MCF 10A (cell line): ENCODE measurements at regions of chr9 and their contacts with region 1.

Region 1: DNA sequence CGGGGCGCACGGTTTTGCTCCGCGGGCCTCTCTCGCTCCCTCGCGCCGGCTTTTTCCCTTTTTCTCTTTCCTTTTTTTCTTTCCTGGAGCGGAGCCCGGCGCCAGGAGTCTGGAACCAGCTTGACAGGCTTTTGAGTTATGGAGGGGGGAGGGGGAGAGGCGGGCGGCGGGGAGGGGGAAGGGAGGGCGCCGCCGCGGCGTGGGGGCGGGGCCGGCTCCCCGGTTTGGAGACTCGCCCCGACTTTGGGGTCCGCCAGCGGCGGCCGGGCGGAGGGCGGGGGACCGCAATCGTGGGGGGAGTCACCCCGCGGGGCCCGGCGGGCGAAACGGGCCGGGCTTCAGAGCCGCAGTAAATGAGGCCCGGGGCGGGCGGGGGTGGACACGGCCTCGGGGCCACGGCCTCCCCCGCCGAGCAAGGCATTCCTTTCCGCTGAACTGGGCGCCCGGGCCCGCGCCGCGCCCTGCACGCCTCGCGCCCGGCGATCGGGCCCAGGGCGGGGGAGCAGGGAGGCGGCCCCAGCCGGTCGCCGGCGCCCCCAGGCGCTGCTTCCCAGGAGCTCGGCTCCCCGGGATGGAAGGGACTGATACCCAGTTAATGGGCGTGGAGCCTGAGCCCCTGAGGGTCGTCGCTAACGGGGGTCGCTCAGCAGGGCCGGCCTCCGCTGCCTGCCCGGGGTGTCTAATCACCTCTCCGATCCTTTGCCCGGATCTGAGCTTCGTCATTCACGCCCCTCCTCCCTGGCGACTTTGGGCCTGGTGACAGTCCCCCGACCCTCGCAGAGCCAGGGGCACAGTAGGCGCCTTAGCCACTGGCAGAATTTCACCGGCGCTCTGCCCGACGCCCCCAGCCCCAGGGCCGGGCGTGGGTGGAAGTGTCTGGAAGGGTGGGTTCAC is 138.1 kb downstream of the C9orf50 start:
- DNase-seq: peak; percentile 92
- H3K4me3 Mint-ChIP-seq: peak overlapping the region; percentile 70
- H3K27ac Mint-ChIP-seq: peak overlapping the region; percentile 93
- H3K4me1 Mint-ChIP-seq: peaks cover 47% of the 10 kb centered on the region
- H3K27me3 Mint-ChIP-seq: no peaks in the 10 kb centered on the region
- CTCF ChIP-seq: no peak

Region 2: DNA sequence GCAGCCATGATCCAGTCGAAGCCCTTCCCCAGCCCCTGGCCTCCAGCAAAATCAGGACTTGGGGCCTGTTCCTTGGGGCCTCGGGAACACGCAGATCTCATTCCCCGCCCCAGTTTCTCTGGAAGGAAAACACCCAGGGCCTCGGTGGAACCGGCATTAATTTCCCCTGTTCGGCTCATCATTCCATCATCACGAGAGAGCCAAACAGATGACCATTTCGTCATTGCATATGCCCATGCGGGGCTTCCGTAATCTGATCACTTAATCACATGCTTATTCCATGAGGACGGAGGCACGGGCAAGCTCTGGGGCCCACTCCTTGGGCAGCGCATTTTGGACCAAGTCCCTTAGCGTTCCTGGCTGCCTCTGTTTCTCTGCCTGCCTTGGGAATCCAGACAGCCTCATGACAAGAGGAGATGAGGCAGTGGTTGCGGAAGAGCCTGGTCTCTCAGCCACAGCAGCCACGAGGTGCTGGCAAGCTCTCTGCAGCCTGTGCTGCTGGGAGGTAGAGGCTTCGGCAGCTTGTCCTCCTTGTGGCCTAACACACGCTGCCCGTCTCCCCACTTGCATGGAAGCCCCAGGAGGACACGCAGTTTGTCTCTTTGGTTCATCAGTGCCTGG is 239.7 kb before region 1 on chr9:
- CTCF ChIA-PET with region 1: no interaction called
- POLR2A ChIA-PET with region 1: no interaction called
- intact Hi-C with region 1: no loop called
- DNase-seq: no peak
- H3K4me3 Mint-ChIP-seq: no peak overlapping the region
- H3K27ac Mint-ChIP-seq: no peak overlapping the region
- H3K4me1 Mint-ChIP-seq: peaks cover 10% of the 10 kb centered on the region
- H3K27me3 Mint-ChIP-seq: no peaks in the 10 kb centered on the region
- CTCF ChIP-seq: no peak

Region 3: DNA sequence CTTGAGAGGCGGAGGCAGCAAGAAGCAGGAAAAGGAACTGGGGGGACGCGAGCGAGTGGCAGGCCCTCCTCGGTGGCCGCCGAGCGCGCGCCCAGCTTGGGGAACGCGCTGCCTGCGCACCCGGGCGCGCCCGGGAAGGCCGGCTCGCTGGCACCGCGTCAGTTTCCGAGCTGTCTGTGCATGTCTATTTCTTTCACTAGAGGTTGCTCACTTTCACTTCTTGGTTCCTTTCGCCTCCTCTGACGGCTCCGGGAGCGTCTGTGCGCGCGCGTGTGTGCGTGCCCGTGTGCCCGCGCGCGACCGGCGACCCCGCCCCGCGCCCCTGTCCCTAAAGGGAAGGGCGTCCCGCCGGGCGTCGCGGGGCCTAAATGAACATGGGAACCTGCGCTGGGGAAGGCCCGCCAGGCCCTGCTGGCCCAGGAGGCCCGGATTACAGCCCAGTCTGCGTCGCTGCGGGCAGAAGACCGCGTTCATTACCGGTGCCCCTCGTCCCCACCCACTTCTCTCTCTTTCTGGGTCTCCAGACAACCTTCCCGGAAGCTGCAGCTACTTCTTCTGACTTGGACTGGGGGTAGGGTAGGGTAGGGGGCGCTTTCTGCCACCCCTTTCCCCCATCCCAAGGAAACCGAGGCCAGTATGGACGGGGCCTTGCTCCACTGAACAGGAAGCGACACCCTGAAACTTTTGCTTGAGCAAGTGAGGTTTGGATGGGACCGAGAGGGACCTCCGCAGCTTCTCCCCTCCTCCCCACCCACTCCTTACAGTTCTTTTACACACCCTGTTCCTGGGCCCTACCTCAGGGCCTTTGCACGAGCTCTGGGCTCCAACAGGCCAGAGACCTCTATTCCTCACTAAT is 99.0 kb before region 1 on chr9:
- CTCF ChIA-PET with region 1: interaction called, 3 read pairs
- POLR2A ChIA-PET with region 1: interaction called, 10 read pairs
- intact Hi-C with region 1: no loop called
- DNase-seq: peak; percentile 52
- H3K4me3 Mint-ChIP-seq: peak overlapping the region; percentile 53
- H3K27ac Mint-ChIP-seq: no peak overlapping the region
- H3K4me1 Mint-ChIP-seq: peaks cover 6% of the 10 kb centered on the region
- H3K27me3 Mint-ChIP-seq: no peaks in the 10 kb centered on the region
- CTCF ChIP-seq: no peak

Region 4: GRCh38 chr9:129413537-129414376 is 69.0 kb before region 1 on chr9:
- CTCF ChIA-PET with region 1: no interaction called
- POLR2A ChIA-PET with region 1: interaction called, 10 read pairs
- intact Hi-C with region 1: no loop called
- DNase-seq: peak; percentile 95
- H3K4me3 Mint-ChIP-seq: peak overlapping the region; percentile 73
- H3K27ac Mint-ChIP-seq: peak overlapping the region; percentile 95
- H3K4me1 Mint-ChIP-seq: no peaks in the 10 kb centered on the region
- H3K27me3 Mint-ChIP-seq: no peaks in the 10 kb centered on the region
- CTCF ChIP-seq: no peak

Region 5: GRCh38 chr9:129460323-129461261 is 22.2 kb before region 1 on chr9:
- CTCF ChIA-PET with region 1: interaction called, 5 read pairs
- POLR2A ChIA-PET with region 1: interaction called, 40 read pairs
- intact Hi-C with region 1: no loop called
- DNase-seq: peak; percentile 97
- H3K4me3 Mint-ChIP-seq: peak overlapping the region; percentile 64
- H3K27ac Mint-ChIP-seq: peak overlapping the region; percentile 86
- H3K4me1 Mint-ChIP-seq: peaks cover 7% of the 10 kb centered on the region
- H3K27me3 Mint-ChIP-seq: no peaks in the 10 kb centered on the region
- CTCF ChIP-seq: no peak

Region 6: DNA sequence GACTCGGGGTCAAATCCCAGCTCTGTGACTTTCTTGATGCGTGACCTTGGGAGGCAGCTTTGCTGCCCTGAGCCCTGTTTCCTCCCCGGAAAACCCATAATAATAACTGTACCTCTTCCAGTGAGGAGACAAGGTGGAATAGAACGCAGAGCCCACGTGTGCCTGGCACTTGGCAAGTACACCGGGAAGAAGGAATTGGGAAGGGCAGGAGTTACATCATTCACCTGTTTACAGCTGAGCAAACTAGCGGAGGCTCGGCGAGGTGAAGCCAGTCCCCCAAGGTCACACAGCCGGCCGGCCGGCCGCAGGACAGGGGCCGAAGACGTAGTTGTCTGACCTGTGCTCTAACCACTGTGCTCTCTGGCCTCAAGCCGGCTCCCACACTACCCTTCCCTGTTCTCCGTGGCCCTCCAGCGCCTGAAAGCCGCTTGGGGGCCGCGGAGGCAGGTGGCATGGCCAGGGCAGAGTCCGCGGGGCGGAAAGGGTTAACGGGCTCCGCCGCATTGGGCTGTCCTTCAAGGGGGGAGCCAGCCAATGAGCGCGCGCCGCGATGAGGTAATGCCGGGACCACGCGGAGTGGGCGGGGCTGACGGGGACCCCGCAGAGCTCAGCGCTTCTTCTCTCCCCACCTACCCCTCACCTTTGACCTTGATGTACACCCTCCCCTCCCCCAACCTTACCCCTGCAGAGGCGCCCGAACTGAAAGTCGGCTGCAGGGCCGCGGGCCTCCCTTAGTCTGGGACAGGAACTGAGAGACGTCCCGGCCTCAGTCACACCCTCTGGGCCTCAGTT is 13.0 kb after region 1 on chr9:
- CTCF ChIA-PET with region 1: interaction called, 5 read pairs
- POLR2A ChIA-PET with region 1: interaction called, 155 read pairs
- intact Hi-C with region 1: no loop called
- DNase-seq: peak; percentile 91
- H3K4me3 Mint-ChIP-seq: peak overlapping the region; percentile 76
- H3K27ac Mint-ChIP-seq: peak overlapping the region; percentile 66
- H3K4me1 Mint-ChIP-seq: peaks cover 49% of the 10 kb centered on the region
- H3K27me3 Mint-ChIP-seq: no peaks in the 10 kb centered on the region
- CTCF ChIP-seq: no peak

Region 7: DNA sequence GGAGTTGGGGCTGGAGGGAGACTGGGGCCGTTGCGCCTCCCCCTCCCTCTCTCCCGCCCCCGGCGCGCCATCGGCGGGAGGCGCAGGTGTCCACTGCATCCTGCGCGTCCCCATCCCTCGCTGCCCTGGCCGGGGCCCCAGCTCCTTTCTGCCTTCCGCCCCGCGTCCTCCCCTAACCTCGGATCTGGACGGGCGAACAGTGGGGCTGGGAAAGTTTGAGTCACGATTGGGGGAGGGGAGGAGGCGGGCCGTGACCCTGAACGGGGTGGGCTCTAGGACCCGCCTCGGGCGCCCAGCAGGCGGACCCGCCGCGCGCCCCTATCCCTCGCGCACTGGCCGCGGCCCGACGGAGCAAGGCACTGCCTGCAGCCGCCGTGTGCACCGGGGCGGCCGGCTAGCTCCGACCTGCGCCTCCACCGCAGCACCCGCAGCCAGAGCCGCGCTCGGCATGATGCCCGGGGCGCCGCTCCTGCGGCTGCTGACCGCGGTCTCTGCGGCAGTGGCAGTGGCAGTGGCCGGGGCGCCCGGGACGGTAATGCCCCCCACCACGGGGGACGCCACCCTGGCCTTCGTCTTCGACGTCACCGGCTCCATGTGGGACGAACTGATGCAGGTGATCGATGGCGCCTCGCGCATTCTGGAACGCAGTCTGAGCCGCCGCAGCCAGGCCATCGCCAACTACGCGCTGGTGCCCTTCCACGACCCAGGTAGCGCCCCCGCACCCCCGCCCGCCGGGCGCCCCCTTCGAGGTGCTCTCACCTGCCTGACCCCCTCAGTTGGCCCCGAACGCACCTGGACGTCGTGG is 782.9 kb after region 1 on chr9 and contains the start of gene HMCN2:
- CTCF ChIA-PET with region 1: no interaction called
- POLR2A ChIA-PET with region 1: no interaction called
- intact Hi-C with region 1: no loop called
- DNase-seq: no peak
- H3K4me3 Mint-ChIP-seq: no peak within 1 kb of the TSS
- H3K27ac Mint-ChIP-seq: no peak within 1 kb of the TSS
- H3K4me1 Mint-ChIP-seq: no peaks in the 10 kb centered on the region
- H3K27me3 Mint-ChIP-seq: peaks cover 87% of the 10 kb centered on the region
- CTCF ChIP-seq: no peak
- total RNA-seq, gene HMCN2: not detected in 2 replicates